A549 (cell line): ENCODE measurements at regions of chr2 and their contacts with region 1.

Region 1: DNA sequence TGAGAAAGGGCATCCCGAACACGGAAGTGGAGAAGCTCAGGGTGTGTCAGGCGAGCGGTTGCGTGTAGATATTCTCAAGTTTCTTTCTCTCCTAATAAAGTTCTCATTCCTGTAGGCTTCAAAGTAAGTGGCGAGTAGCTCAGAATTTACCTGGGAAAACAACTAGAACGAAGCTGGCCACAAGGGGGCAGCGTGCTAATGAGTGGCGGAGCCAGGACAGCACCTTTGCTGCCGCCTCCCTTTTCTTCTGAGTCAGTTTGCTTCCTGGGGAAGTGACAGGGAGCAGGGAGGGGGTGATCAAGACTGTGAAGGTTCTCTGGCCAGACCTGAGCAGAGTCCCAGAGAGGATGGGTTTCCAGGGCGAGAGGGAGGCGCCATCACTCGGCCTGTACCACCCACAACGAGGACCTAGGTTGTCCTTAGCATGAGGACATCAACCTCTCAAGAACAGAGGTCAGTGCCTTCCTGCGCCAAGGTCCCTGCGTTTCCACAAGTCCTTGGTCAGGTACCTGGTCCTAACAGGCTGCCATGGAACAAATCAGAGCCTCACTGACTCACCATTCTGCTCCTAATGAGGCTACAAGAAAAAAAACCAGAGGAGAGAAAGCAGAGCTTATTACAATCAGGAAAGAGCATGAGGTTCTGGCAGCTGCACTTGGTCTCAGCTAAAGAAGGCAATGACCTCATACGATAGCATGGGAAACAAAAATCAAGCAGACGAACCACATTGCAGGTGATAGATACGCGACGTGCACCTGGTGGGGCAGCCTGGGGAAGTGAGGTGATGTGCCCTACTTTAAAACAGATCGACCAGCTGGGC is 98.6 kb downstream of the PLB1 start:
- DNase-seq: peak; percentile 89 to 90
- ATAC-seq: peak; percentile 59 to 86
- H3K4me3 ChIP-seq: no peak overlapping the region
- H3K27ac ChIP-seq: peak overlapping the region; percentile 69 to 80
- H3K4me1 ChIP-seq: peaks cover 28% of the 10 kb centered on the region
- CTCF ChIP-seq: peak; percentile 97
- EP300 ChIP-seq: no peak
- POLR2A ChIP-seq: no peak
- RAD21 ChIP-seq: peak; percentile 93 to 96

Region 2: DNA sequence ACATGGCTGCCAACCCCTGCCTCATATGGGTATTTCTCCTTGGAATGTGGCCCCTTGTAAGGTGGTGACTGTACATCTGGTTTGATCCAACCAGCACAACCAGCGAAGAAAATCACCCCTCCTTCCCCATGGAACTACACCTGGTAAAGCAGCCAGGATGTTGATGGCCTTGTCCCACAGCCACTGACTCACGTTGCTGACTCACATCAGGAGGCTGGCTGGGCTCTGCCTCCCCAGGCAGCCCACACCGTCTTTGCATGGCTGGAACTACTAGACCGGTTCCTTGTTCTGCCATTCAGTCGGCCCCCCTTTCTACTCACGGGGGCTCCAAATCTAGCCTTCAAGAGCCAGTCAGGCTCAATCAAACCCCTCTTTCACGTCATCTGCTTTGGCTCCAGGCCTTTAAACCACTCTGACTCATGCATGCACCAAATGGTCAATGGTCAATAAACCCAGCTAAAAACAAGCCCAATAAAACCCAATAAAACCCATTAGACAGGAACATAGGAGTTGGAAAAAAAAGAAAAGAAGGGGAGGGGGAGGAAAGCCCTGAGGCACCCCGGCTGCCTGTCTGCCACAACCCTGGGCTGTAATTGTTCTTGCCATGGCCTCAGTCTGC is 16.2 kb after region 1 on chr2:
- CTCF ChIA-PET with region 1: interaction called, 159 read pairs
- POLR2A ChIA-PET with region 1: no interaction called
- DNase-seq: peak; percentile 84 to 95
- ATAC-seq: peak; percentile 95
- H3K4me3 ChIP-seq: no peak overlapping the region
- H3K27ac ChIP-seq: peak overlapping the region; percentile 69 to 82
- H3K4me1 ChIP-seq: peaks cover 19% of the 10 kb centered on the region
- CTCF ChIP-seq: no peak
- EP300 ChIP-seq: peak in 1 of 2 experiments; percentile 33; a peak in 1 of 5 replicates
- POLR2A ChIP-seq: no peak
- RAD21 ChIP-seq: peak in 1 of 2 experiments; percentile 32; a peak in 1 of 5 replicates

Region 3: DNA sequence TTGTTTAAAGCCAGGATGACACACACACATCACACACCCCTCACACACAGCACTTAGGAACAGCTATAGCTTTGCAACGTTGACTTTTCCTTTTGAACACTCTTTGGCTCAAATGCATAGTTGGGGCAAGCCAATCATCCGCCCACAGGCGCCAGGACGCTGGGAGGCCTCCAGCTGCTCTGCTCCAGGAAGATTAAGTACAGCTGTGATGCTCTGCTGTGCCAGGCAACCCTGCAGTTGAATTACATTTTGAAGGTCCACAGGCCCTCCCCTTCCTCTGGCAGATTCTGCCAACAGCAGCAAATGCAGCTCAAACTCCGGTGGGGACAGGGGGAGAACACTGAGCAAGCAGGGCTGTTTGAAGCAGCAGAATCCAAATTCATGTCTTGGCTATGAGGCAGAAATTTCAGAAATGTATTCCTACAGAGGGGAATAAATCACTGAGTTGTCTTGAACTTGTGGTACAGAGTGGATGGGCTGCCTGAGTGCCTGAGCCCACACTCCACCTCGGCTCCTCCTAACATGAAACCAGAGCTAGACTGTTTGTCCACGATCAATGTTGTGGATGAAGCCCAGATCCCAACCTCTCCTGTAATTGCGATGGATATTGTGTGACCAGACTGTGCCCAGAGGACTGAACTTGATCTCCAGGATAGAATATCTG is 70.7 kb after region 1 on chr2:
- CTCF ChIA-PET with region 1: interaction called, 19 read pairs
- POLR2A ChIA-PET with region 1: no interaction called
- DNase-seq: no peak
- ATAC-seq: no peak
- H3K4me3 ChIP-seq: no peak overlapping the region
- H3K27ac ChIP-seq: no peak overlapping the region; a peak in 1 of 6 replicates
- H3K4me1 ChIP-seq: peaks cover 33% of the 10 kb centered on the region
- CTCF ChIP-seq: no peak
- EP300 ChIP-seq: no peak
- POLR2A ChIP-seq: no peak
- RAD21 ChIP-seq: no peak

Region 4: GRCh38 chr2:28721601-28722191 is 127.2 kb after region 1 on chr2:
- CTCF ChIA-PET with region 1: interaction called, 42 read pairs
- POLR2A ChIA-PET with region 1: no interaction called
- DNase-seq: no peak
- ATAC-seq: no peak
- H3K4me3 ChIP-seq: no peak overlapping the region
- H3K27ac ChIP-seq: no peak overlapping the region
- H3K4me1 ChIP-seq: peaks cover 11% of the 10 kb centered on the region
- CTCF ChIP-seq: no peak
- EP300 ChIP-seq: no peak
- POLR2A ChIP-seq: no peak
- RAD21 ChIP-seq: no peak

Region 5: GRCh38 chr2:28761420-28761819 is 166.9 kb after region 1 on chr2:
- CTCF ChIA-PET with region 1: interaction called, 135 read pairs
- POLR2A ChIA-PET with region 1: no interaction called
- DNase-seq: no peak
- ATAC-seq: no peak
- H3K4me3 ChIP-seq: no peak overlapping the region
- H3K27ac ChIP-seq: no peak overlapping the region
- H3K4me1 ChIP-seq: peaks cover 32% of the 10 kb centered on the region
- CTCF ChIP-seq: no peak
- EP300 ChIP-seq: no peak
- POLR2A ChIP-seq: no peak
- RAD21 ChIP-seq: no peak

Region 6: DNA sequence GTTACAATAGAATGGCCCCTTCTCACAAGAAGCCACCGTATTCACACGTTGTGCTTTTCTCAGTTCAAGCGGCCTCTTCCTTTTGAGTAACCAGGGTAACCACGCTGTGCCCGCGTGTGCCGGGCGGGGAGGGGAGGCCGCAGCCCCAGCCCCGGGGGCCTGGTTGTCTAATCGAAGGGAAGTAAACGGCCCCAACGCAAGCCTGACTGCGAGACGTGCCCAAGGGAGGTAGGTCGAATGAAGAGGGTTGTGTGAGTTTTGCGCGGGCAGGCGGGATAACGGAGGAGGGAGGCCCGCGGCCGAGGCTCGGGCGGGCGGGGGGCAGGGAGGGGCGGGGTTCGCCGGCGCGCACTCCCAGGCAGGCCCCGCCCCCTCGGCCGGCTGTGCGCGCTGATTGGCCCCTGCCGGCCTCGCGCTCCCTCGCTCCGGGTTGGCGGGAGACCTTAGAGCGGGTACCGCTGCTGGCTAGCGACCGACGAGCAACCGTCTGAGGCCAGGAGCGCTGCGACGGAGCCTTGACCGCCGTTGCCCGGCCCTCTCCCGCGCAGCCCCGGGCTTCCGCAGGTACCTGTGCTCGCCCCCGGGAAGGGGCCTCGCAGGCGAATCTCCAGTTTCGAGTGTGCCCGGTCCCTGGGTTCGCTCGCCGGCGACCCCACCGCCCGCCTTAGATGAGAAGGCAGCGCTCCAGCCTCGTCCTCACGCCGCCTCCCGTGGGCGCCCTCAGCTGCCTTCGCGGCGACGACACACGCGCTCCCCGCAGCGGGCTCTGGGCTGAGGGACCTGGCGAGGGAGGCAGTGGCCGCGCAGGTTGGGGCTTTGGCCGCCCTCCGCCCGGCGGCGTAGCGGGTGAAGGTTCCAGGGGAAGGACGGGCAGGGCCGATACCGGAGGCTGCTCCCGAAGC is 216.1 kb after region 1 on chr2 and contains the start of gene SPDYA:
- CTCF ChIA-PET with region 1: interaction called, 14 read pairs
- POLR2A ChIA-PET with region 1: no interaction called
- DNase-seq: peak; percentile 68 to 81
- ATAC-seq: peak; percentile 94 to 95
- H3K4me3 ChIP-seq: peak within 1 kb of the TSS; percentile 43
- H3K27ac ChIP-seq: peak within 1 kb of the TSS; percentile 74 to 85
- H3K4me1 ChIP-seq: peaks cover 11% of the 10 kb centered on the region; the same call in 2 of the 3 replicates
- CTCF ChIP-seq: no peak
- EP300 ChIP-seq: no peak
- POLR2A ChIP-seq: 0 out of 2 replicates have a peak, but pooled peaks have one; percentile 7
- RAD21 ChIP-seq: no peak
- polyA plus RNA-seq, gene SPDYA: 0.17 and 0.49 TPM in 2 replicates